ENCODE measurements at regions of chr2 and their contacts with region 1.

Region 1: DNA sequence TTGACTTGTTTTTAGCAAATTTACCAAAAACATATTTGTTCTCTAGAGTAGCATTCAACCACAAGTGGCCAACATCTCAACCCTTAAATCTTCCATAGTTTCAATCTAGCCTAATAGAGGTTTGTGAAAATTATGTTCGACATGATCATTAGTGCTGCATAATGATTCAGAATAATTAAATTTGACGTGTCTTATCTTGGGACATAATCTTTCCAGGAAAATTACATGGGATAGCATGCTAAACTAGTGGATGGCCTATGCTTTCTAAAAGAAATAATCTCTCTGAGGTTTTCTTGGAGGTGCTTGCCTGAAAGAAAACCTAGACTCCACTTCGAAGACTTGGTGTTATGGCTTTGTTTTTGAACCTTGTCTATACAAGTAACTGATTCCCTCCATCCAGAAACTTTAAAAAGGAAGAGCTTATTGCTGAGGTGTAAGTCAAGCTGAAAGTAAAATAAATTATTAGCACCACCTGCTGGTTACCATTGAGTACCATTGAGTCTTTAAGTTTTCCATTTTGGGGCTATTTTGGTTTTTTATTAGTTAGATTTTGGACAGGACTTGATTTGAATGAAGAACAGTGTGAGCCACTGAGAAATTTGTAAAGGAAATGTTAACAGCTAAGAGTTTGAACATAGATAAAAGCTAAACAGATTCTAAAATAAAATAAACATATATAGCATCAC is 32.7 kb downstream of the COX7A2L start:
- DNase-seq: peak; percentile 48
- ATAC-seq: peak; percentile 48; the same call in 1 of the 2 replicates
- H3K4me3 ChIP-seq: no peak overlapping the region
- H3K27ac ChIP-seq: no peak overlapping the region
- H3K4me1 ChIP-seq: peaks cover 9% of the 10 kb centered on the region
- H3K27me3 ChIP-seq: no peaks in the 10 kb centered on the region
- CTCF ChIP-seq: peak; percentile 77

Region 2: GRCh38 chr2:41869542-41870264 is 458.6 kb before region 1 on chr2:
- CTCF ChIA-PET with region 1: no interaction called
- POLR2A ChIA-PET with region 1: interaction called, 4 read pairs
- intact Hi-C with region 1: loop called (anchors 5 kb)
- DNase-seq: peak; percentile 79
- ATAC-seq: peak; percentile 92
- H3K4me3 ChIP-seq: no peak overlapping the region
- H3K27ac ChIP-seq: no peak overlapping the region
- H3K4me1 ChIP-seq: peaks cover 5% of the 10 kb centered on the region
- H3K27me3 ChIP-seq: no peaks in the 10 kb centered on the region
- CTCF ChIP-seq: peak; percentile 90

Region 3: DNA sequence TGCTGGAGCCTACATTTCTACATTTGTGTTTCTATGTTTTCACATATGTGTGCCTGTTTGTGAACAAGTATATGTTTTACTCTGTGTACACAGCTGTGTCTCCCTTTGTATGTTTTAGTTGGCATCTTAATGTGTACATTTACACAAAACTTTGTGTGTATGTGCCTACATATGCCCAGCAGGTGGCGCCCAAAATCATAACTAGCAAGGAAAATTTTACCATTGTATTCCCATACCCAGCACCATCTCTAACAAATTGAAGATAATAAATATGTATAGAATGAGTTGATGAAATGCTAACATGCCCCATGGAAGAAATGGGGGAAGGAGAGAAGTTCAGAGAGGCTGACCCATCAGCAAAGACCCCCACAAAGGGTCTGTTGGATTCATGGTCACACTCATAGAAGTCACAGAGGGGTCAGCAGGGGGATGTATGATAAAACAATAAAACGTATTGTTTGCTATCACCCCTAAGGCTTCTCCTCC is 232.3 kb before region 1 on chr2:
- CTCF ChIA-PET with region 1: interaction called, 7 read pairs
- POLR2A ChIA-PET with region 1: interaction called, 3 read pairs
- intact Hi-C with region 1: loop called (anchors 1 kb)
- DNase-seq: peak; percentile 86
- ATAC-seq: peak; percentile 52
- H3K4me3 ChIP-seq: no peak overlapping the region
- H3K27ac ChIP-seq: no peak overlapping the region
- H3K4me1 ChIP-seq: peaks cover 6% of the 10 kb centered on the region; the same call in 1 of the 2 replicates
- H3K27me3 ChIP-seq: no peaks in the 10 kb centered on the region
- CTCF ChIP-seq: peak; percentile 92

Region 4: GRCh38 chr2:42238644-42239288 is 89.5 kb before region 1 on chr2:
- CTCF ChIA-PET with region 1: no interaction called
- POLR2A ChIA-PET with region 1: no interaction called
- intact Hi-C with region 1: loop called (anchors 5 kb)
- DNase-seq: peak; percentile 52
- ATAC-seq: peak; percentile 82
- H3K4me3 ChIP-seq: no peak overlapping the region
- H3K27ac ChIP-seq: peak overlapping the region; percentile 61
- H3K4me1 ChIP-seq: peaks cover 15% of the 10 kb centered on the region
- H3K27me3 ChIP-seq: no peaks in the 10 kb centered on the region
- CTCF ChIP-seq: peak; percentile 73

Region 5: DNA sequence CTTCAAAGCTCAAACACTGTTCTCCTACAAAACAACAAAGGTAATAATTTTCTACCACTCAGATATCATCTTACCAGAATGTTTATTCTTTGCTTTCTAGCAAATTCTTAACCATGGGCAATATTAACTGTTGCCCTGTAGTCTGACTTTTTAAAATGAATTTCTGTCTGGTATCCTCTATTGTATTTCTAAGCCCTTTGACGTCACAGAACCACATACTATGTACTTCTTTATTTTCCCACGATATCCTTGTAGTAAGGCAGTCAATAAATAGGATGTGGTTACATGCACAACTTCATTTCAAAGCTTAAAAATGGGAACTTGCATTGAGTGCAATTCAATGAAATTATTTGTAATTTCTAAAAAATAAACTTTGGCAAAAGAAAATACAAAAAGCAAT is 1208.8 kb after region 1 on chr2:
- CTCF ChIA-PET with region 1: no interaction called
- POLR2A ChIA-PET with region 1: interaction called, 10 read pairs
- intact Hi-C with region 1: no loop called
- DNase-seq: no peak
- ATAC-seq: no peak
- H3K4me3 ChIP-seq: no peak overlapping the region
- H3K27ac ChIP-seq: no peak overlapping the region
- H3K4me1 ChIP-seq: peaks cover 25% of the 10 kb centered on the region
- H3K27me3 ChIP-seq: no peaks in the 10 kb centered on the region
- CTCF ChIP-seq: no peak